ENCODE measurements at regions of chr15 and their contacts with region 1.

Region 1: GRCh38 chr15:31128919-31129768 is 27.6 kb upstream of the TRPM1 start:
- DNase-seq: peak; percentile 84
- H3K4me3 Mint-ChIP-seq: no peak overlapping the region
- H3K27ac Mint-ChIP-seq: no peak overlapping the region
- H3K4me1 Mint-ChIP-seq: no peaks in the 10 kb centered on the region
- H3K27me3 Mint-ChIP-seq: no peaks in the 10 kb centered on the region

Region 2: DNA sequence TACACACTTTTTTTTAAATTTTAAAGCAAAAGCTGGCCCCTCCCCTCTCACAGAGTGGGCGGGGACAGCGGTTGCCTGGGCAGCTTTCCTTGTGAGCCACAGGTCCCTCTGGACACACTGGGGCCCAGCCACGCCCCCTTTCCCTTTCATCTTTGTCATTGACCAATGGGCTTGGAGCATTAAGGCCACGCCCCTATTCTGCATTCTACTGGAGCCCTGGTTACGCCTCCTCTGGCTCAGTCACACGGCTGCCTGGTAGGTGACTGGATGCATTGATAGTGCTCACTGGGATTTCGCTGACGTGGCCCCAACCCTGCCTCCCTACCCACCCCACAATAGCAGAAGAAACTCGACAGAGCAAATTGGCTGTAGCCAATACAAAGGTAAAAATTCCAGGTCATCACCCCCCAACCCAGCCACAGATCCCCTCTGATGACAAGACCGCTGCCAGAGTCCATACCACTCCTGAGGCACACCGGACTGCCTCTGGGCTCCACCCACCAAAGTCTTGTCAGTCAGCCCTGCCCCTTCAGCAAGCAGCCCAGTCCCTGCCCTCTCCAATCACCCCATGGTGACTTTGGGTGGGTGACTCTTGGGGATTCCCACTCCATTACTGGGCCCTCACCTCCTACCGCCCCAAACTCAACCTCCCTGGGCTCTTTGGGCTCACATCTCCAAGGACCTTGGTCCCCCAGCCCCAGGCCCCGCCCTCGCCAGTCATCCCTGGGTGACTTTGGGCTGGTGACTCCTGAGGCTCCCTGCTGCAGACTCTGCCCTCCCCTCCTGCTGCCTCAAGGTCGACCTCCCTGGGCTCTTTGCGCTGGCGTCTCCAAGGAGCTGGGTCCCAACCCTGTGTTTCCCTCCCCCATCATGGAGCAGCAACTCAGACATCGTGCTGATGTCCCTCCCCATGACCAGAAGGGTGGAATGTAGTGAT is 337.6 kb before region 1 on chr15:
- CTCF ChIA-PET with region 1: interaction called, 3 read pairs
- intact Hi-C with region 1: loop called (anchors 5 kb)
- DNase-seq: no peak
- H3K4me3 Mint-ChIP-seq: no peak overlapping the region
- H3K27ac Mint-ChIP-seq: no peak overlapping the region
- H3K4me1 Mint-ChIP-seq: no peaks in the 10 kb centered on the region
- H3K27me3 Mint-ChIP-seq: no peaks in the 10 kb centered on the region

Region 3: DNA sequence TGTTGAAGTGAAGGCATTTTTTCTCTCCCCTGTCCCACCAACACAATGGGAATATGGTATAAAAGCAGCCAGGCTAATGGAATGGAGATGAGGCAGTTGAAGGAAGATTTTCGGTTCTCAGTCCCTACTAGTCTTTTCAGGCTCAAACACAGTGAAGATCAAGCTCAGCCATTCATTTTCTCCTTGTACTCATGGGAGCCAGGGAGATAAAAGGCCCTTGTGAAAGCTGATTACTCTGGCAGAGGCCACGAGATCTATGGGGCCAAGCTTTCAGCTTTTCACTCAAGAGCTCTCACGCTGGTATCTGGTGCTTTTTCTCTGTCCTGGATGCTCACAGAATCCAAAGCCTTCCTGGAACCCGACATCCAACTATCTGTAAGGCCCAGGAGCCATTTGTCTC is 239.9 kb before region 1 on chr15:
- CTCF ChIA-PET with region 1: interaction called, 11 read pairs
- intact Hi-C with region 1: loop called (anchors 1 kb)
- DNase-seq: no peak
- H3K4me3 Mint-ChIP-seq: no peak overlapping the region
- H3K27ac Mint-ChIP-seq: no peak overlapping the region
- H3K4me1 Mint-ChIP-seq: peaks cover under 1% of the 10 kb centered on the region
- H3K27me3 Mint-ChIP-seq: peaks cover 1% of the 10 kb centered on the region

Region 4: DNA sequence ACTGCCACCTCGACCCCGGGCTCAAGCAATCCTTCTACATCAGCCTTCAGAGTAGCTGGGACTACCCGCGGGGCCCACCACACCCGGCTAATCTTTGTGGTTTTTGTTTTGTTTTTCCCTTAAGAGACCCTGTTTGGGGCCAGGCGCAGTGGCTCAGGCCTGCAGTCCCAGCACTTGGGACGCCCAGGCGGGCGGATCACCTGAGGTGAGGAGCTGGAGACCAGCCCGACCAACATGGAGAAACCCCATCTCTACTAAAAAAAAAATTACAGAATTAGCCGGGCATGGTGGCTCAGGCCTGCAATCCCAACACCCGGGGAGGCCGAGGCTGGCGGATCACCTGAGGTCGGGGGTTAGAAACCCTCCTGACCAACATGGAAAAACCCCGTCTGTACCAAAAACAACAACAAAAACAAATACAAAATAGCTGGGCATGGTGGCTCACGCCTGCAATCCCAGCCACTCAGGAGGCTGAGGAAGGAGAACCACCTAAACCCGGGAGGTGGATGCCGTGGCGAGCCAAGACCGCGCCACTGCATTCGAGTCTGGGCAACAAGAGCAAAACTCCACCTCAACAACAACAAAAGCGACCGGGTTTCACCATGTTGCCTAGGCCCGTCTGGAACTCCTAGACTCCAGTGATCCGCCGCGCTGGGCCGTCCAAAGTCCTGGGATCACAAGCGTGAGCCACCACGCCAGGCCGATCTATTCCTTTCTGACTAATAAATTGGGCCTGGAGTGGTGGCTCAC is 233.5 kb before region 1 on chr15:
- CTCF ChIA-PET with region 1: interaction called, 11 read pairs
- intact Hi-C with region 1: loop called (anchors 1 kb)
- DNase-seq: no peak
- H3K4me3 Mint-ChIP-seq: no peak overlapping the region
- H3K27ac Mint-ChIP-seq: no peak overlapping the region
- H3K4me1 Mint-ChIP-seq: peaks cover 4% of the 10 kb centered on the region
- H3K27me3 Mint-ChIP-seq: peaks cover 1% of the 10 kb centered on the region

Region 5: DNA sequence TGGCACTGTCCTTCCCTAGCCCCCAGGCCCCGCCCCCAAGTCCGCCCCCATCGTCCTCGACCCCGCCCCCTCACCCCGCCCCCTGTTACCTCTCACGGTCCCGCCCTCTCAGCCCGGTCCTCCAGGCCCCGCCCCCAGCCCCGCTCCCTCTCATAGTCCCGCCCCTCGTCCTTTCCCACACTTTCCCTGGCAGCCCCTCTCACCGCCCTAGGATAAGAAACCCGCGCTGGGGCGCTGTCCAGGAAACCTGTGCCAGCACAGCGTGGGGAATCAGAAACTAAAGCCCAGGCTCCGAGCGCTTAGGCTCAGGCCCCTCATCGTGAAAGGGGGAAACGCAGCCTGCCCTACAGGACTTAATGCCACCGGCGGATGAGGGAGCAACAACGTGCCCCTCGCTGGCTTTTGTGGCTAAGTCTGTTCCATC is 48.5 kb before region 1 on chr15:
- CTCF ChIA-PET with region 1: no interaction called
- intact Hi-C with region 1: loop called (anchors 5 kb)
- DNase-seq: peak; percentile 29
- H3K4me3 Mint-ChIP-seq: no peak overlapping the region
- H3K27ac Mint-ChIP-seq: no peak overlapping the region
- H3K4me1 Mint-ChIP-seq: peaks cover 2% of the 10 kb centered on the region
- H3K27me3 Mint-ChIP-seq: peaks cover 11% of the 10 kb centered on the region

Region 6: GRCh38 chr15:31148297-31149015 is 19.3 kb after region 1 on chr15:
- CTCF ChIA-PET with region 1: interaction called, 14 read pairs
- intact Hi-C with region 1: no loop called
- DNase-seq: no peak
- H3K4me3 Mint-ChIP-seq: no peak overlapping the region
- H3K27ac Mint-ChIP-seq: no peak overlapping the region
- H3K4me1 Mint-ChIP-seq: no peaks in the 10 kb centered on the region
- H3K27me3 Mint-ChIP-seq: no peaks in the 10 kb centered on the region

Region 7: GRCh38 chr15:31179693-31180092 is 50.5 kb after region 1 on chr15:
- CTCF ChIA-PET with region 1: no interaction called
- intact Hi-C with region 1: no loop called
- DNase-seq: no peak
- H3K4me3 Mint-ChIP-seq: no peak overlapping the region
- H3K27ac Mint-ChIP-seq: no peak overlapping the region
- H3K4me1 Mint-ChIP-seq: peaks cover 7% of the 10 kb centered on the region
- H3K27me3 Mint-ChIP-seq: no peaks in the 10 kb centered on the region

Measured in activated naive CD4-positive, alpha-beta T cell treated with anti-CD3 and anti-CD28 coated beads for 36 hours (primary cell).